Heart left ventricle (tissue), 16 donors: ENCODE measurements at regions of chr15 and their contacts with region 1.

Region 1: DNA sequence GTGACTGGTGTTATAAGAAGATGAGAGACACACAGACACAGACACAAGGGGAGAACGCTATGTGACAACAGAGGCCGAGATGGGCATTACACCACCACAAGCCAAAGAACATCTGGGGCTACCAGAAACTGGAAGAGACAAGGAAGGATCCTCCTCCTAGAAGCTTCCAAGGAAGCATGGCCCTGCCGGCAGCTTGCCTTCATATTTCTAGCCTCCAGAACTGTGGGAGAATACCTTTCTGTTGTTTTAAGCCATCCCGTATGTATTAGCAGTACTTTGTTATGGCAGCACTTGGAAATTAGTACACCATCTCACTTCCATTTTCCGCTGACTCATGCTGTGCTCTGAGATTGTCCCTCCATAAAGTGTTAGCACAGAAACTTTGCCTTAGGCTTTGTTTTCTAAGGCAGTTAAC is 38.7 kb upstream of the CA12 start:
- DNase-seq: no peak
- ATAC-seq: no peak
- H3K4me3 ChIP-seq: no peak overlapping the region
- H3K27ac ChIP-seq: no peak overlapping the region
- H3K4me1 ChIP-seq: no peaks in the 10 kb centered on the region
- H3K27me3 ChIP-seq: no peaks in the 10 kb centered on the region
- CTCF ChIP-seq: no peak
- POLR2A ChIP-seq: no peak

Region 2: GRCh38 chr15:63122002-63122893 is 298.1 kb before region 1 on chr15:
- intact Hi-C with region 1: no loop called
- DNase-seq: peak; percentile 82 to 92 (median 85)
- ATAC-seq: peak; percentile 96 to 98 (median 97)
- H3K4me3 ChIP-seq: peak overlapping the region; percentile 72 to 99 (median 95)
- H3K27ac ChIP-seq: peak overlapping the region; percentile 88 to 97 (median 94)
- H3K4me1 ChIP-seq: peaks cover 0 to 15% (median 7%) of the 10 kb centered on the region in 12 donors
- H3K27me3 ChIP-seq: no peaks in the 10 kb centered on the region
- CTCF ChIP-seq: peak in 10 of 12 donors; percentile 6 to 49 (median 23)
- POLR2A ChIP-seq: no peak

Region 3: DNA sequence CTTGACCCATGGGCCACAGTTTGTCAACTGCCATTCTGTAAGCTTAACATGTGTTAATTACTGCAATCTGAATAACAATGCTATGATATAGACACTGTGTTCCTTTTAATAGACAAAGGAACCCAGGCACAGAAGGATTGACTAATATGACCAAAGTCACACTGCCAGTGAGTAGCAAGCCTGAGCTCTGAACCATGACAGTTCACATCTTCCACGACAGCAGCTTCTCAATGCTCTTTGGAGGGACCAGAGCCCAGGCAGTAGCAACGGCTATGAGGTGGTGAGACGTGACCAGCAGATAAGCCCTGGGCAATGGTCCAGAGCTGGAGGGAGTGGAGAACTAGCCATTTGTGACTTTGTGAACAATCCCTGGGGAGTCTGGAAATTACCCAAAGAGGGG is 58.1 kb before region 1 on chr15:
- intact Hi-C with region 1: loop called in 1 of 10 experiments (anchors 10 kb)
- DNase-seq: peak in 4 of 5 donors; percentile 48 to 78 (median 59)
- ATAC-seq: peak in 3 of 4 donors; percentile 43 to 63 (median 43)
- H3K4me3 ChIP-seq: no peak overlapping the region
- H3K27ac ChIP-seq: no peak overlapping the region
- H3K4me1 ChIP-seq: peaks cover 0 to 25% (median 11%) of the 10 kb centered on the region in 12 donors
- H3K27me3 ChIP-seq: no peaks in the 10 kb centered on the region
- CTCF ChIP-seq: no peak
- POLR2A ChIP-seq: no peak

Region 4: DNA sequence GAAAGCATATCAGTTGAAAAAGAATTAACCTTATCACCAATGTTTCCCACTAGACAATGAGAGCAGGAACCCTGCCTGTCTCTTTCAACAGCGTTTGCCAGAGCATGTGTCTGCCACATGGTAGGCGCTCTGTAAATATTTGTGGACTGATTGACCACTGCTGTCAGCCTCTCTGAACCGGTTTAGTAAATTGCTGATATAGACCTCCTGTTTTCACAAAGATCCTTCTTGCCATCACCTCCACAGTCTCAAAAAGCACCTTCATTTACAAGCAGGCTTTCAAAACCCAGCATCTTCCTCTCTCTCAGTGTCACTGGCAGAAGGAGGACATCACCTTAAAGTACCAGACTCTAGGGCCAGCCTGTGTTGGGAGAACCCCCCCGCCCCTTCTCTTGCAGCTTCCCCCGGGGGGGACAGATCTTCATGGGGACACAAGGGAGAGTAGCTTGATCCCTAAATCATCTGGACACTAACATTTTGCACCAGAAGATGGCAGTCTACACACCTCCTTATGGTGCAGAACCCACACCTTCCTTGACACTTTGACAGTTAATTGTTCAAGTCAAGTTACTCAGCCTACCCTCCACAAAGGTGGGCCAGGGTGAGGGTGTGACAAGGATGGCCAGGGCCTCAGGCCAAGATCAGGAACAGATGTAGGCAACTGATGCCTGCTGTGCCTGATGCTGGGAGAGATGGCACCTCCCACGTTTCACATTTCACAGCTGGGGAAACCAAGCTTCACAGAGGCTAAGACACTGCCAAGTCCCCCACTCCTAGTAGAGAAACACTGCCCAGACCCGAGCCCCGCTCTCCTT is 46.2 kb after region 1 on chr15:
- intact Hi-C with region 1: no loop called
- DNase-seq: peak in 2 of 5 donors; percentile 25 to 32
- ATAC-seq: peak; percentile 44 to 85 (median 82)
- H3K4me3 ChIP-seq: no peak overlapping the region
- H3K27ac ChIP-seq: no peak overlapping the region
- H3K4me1 ChIP-seq: peaks cover 0 to 11% (median under 1%) of the 10 kb centered on the region in 12 donors
- H3K27me3 ChIP-seq: no peaks in the 10 kb centered on the region
- CTCF ChIP-seq: peak; percentile 46 to 71 (median 59)
- POLR2A ChIP-seq: no peak

Region 5: GRCh38 chr15:63514531-63514943 is 94.2 kb after region 1 on chr15:
- intact Hi-C with region 1: no loop called
- DNase-seq: no peak
- ATAC-seq: no peak
- H3K4me3 ChIP-seq: no peak overlapping the region
- H3K27ac ChIP-seq: peak overlapping the region in 1 of 12 donors; percentile 9
- H3K4me1 ChIP-seq: peaks cover 0 to 92% (median 56%) of the 10 kb centered on the region in 12 donors
- H3K27me3 ChIP-seq: no peaks in the 10 kb centered on the region
- CTCF ChIP-seq: no peak
- POLR2A ChIP-seq: no peak